ENCODE measurements at regions of chr11 and their contacts with region 1.

Region 1: GRCh38 chr11:69888483-69889076 is 69.4 kb upstream of the FGF3 start:
- DNase-seq: peak; percentile 47 to 61 (median 56)
- H3K4me3 ChIP-seq: no peak overlapping the region
- H3K4me3 Mint-ChIP-seq: no peak overlapping the region
- H3K27ac ChIP-seq: no peak overlapping the region
- H3K27ac Mint-ChIP-seq: no peak overlapping the region
- H3K4me1 ChIP-seq: no peaks in the 10 kb centered on the region
- H3K4me1 Mint-ChIP-seq: peaks cover 0 to 2% (median under 1%) of the 10 kb centered on the region in 4 donors
- H3K27me3 ChIP-seq: no peaks in the 10 kb centered on the region
- H3K27me3 Mint-ChIP-seq: peaks cover 9 to 27% of the 10 kb centered on the region in 2 donors

Region 2: DNA sequence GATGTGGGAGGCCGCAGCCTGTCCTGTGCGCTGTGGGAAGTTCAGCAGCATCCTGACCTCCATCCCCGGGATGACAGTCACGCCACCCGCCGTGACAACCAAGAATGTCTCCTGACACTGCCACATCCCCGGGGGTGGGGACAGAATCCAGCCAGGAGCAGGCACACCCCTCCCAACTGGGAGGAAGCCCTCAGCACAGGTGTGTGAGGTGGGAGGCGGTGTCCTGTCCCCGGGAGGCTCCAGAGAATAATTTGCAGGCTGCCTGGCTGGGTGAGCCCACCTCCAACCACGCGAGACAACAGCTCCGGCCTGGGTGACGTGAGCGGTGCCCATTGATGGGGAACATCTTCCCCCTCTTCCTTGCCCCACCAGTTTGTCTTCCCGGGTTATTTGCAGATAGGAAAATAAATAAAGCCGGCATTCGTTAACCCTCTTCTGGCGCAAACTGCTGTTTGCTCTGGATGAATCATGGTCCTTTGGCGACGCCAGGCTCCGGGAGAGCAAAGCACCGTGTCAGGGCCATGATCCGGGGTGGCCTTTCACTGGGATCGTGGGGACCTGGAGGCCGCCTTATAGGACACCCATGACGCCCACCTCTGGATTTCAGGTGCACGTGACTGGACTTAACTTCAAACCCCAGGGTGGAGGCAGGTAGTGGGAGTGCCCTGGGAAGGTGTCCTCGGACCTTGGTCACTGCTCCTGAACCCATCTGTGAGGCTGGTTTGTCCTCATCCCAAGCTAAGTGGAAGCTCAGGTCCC is 233.8 kb before region 1 on chr11:
- CTCF ChIA-PET with region 1: no interaction called
- POLR2A ChIA-PET with region 1: no interaction called
- intact Hi-C with region 1: no loop called
- DNase-seq: no peak
- H3K4me3 ChIP-seq: no peak overlapping the region
- H3K4me3 Mint-ChIP-seq: no peak overlapping the region
- H3K27ac ChIP-seq: no peak overlapping the region
- H3K27ac Mint-ChIP-seq: no peak overlapping the region
- H3K4me1 ChIP-seq: no peaks in the 10 kb centered on the region
- H3K4me1 Mint-ChIP-seq: peaks cover 0 to under 1% (median 0%) of the 10 kb centered on the region in 4 donors
- H3K27me3 ChIP-seq: no peaks in the 10 kb centered on the region
- H3K27me3 Mint-ChIP-seq: no peaks in the 10 kb centered on the region

Region 3: DNA sequence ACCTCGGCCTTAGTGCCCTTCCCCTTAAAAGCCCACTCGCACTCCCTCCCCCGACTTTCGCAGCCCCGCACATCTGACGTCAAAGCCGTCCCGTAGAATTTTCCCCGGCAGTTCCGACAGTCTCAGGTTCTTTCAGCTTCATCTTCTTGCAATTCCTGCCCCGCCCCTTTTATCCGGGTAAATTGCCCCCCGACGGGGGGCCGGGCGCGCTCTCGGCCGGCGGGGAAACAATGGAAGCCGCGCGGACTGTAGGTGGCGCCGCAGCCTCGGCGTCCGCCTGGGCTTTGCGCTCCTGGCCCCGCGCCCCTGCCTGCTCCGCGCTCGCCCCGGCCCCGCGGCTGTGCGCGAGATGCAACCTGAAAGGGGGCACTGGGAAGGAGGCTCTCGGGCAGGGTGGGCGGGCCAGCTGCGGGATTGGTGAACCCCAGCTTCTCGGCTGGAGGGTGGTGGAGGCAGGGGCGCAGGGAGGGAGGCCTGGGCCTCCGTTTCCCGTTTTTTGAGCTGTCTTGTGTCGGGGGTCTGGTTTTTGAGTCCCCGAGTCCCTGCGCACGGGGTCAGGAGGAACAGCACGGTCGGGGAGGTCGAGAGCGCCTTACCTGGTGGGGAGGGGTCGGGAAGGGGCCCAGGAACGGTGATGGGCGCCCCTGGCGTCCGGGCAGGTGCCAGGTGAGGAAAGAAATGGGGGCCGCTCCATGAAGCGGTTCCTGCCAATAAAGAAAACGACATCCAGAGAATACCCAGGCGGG is 183.9 kb before region 1 on chr11:
- CTCF ChIA-PET with region 1: no interaction called
- POLR2A ChIA-PET with region 1: no interaction called
- intact Hi-C with region 1: loop called (anchors 5 kb)
- DNase-seq: no peak
- H3K4me3 ChIP-seq: no peak overlapping the region
- H3K4me3 Mint-ChIP-seq: peak overlapping the region in 5 of 8 donors; percentile 26 to 55 (median 34)
- H3K27ac ChIP-seq: no peak overlapping the region
- H3K27ac Mint-ChIP-seq: no peak overlapping the region
- H3K4me1 ChIP-seq: peaks cover 7% of the 10 kb centered on the region
- H3K4me1 Mint-ChIP-seq: peaks cover 4 to 22% (median 12%) of the 10 kb centered on the region in 4 donors
- H3K27me3 ChIP-seq: peaks cover 24% of the 10 kb centered on the region
- H3K27me3 Mint-ChIP-seq: peaks cover 25 to 30% of the 10 kb centered on the region in 2 donors

Region 4: DNA sequence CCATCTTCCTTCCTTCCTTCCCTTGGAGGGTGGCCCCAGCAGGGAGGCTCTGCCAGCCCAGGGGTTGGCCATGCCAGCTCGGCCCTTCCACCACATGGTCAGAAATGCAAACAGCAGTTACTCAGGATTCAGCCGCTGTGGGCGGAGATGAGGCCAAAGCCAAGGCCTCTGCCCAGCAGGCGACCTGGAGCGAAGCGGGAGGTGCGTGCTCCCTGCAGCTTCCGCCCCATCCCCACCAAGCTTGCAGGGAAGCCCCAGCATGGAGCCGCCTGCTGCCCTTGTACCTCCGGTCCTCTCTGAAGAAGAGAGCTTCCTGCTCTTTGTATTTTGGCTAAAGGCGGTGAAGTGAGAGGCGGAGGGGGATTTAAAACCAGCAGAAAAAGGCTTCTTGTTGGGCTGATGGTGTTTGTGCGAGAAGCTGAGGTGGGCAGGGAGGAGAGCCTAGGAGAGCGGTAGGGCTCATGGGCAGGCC is 239.9 kb after region 1 on chr11:
- CTCF ChIA-PET with region 1: no interaction called
- POLR2A ChIA-PET with region 1: no interaction called
- intact Hi-C with region 1: no loop called
- DNase-seq: no peak
- H3K4me3 ChIP-seq: no peak overlapping the region
- H3K4me3 Mint-ChIP-seq: no peak overlapping the region
- H3K27ac ChIP-seq: no peak overlapping the region
- H3K27ac Mint-ChIP-seq: no peak overlapping the region
- H3K4me1 ChIP-seq: no peaks in the 10 kb centered on the region
- H3K4me1 Mint-ChIP-seq: peaks cover 0 to 1% (median 0%) of the 10 kb centered on the region in 4 donors
- H3K27me3 ChIP-seq: no peaks in the 10 kb centered on the region
- H3K27me3 Mint-ChIP-seq: peaks cover 0 to 2% of the 10 kb centered on the region in 2 donors